Calu3 (cell line): ENCODE measurements at regions of chr6 and their contacts with region 1.

Region 1: GRCh38 chr6:34236131-34236996 is at the start of gene HMGA1:
- DNase-seq: peak; percentile 98
- H3K4me3 Mint-ChIP-seq: peak within 1 kb of the TSS; percentile 81
- H3K27ac Mint-ChIP-seq: peak within 1 kb of the TSS; percentile 97
- H3K4me1 Mint-ChIP-seq: peaks cover 53% of the 10 kb centered on the region
- H3K27me3 Mint-ChIP-seq: no peaks in the 10 kb centered on the region
- CTCF ChIP-seq: no peak
- total RNA-seq, gene HMGA1: 1,138 and 1,378 TPM in 2 replicates

Region 2: DNA sequence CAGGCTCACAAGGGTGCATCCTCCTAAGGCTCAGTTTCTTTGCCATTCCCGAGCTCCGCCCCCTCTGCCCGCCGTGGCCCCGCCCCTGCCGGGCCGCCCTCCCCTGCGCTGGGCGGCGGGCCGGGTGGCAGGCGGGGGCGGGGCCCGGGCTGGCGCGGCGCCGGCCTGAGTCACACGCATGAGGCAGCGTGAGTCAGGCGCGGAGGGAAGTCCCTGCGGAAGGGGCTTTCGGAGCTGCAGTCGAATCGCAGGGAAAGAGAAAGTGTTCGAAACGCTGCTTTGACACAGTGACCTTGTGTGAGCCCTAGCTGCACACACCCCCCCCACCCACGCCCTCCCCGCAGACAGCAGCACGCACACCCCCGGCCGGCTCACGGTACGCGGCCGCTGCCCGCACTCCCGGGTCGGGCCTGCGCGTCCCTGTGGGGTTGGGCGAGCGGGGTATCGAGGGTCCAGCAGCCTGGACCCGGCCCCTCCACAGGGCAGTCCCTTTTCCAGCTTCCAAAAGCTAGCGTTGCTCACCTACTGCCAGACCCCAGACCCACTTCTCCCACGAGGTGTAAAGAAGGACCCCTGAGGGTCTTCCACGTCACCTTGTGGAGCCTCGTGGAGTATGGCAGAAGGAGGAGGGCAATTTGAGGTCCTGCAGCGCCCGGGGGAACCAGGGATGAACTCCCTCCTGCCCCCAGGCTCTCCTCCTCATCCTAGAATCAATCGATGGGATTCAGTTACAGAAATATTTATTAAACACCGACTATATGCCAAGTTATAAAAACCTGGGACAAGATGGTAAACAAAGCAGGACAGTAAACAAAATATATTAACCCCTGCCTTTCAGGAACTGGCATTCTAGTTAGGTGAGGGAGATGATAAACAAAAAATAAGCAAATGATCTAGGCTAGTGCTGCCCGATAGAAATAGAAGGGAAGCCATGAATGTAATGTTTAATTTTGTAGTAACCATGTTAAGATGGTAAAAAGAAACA is 12.1 kb before region 1 on chr6:
- CTCF ChIA-PET with region 1: interaction called, 12 read pairs
- intact Hi-C with region 1: no loop called
- DNase-seq: peak; percentile 99
- H3K4me3 Mint-ChIP-seq: peak overlapping the region; percentile 51
- H3K27ac Mint-ChIP-seq: peak overlapping the region; percentile 59
- H3K4me1 Mint-ChIP-seq: peaks cover 59% of the 10 kb centered on the region
- H3K27me3 Mint-ChIP-seq: no peaks in the 10 kb centered on the region
- CTCF ChIP-seq: no peak

Region 3: GRCh38 chr6:34867484-34867883 is 631.1 kb after region 1 on chr6:
- CTCF ChIA-PET with region 1: no interaction called
- intact Hi-C with region 1: no loop called
- DNase-seq: no peak
- H3K4me3 Mint-ChIP-seq: no peak overlapping the region
- H3K27ac Mint-ChIP-seq: no peak overlapping the region
- H3K4me1 Mint-ChIP-seq: no peaks in the 10 kb centered on the region
- H3K27me3 Mint-ChIP-seq: no peaks in the 10 kb centered on the region
- CTCF ChIP-seq: no peak